Caco-2 (cell line): ENCODE measurements at regions of chr1 and their contacts with region 1.

Region 1: GRCh38 chr1:229258031-229258756 is 12.7 kb upstream of the RAB4A start:
- DNase-seq: peak; percentile 62 to 77
- H3K4me3 ChIP-seq: no peak overlapping the region
- H3K4me3 Mint-ChIP-seq: no peak overlapping the region
- H3K27ac Mint-ChIP-seq: peak overlapping the region; percentile 46
- H3K4me1 ChIP-seq: peaks cover 5% of the 10 kb centered on the region; the same call in 1 of the 2 replicates
- H3K4me1 Mint-ChIP-seq: peaks cover 3% of the 10 kb centered on the region
- H3K27me3 ChIP-seq: no peaks in the 10 kb centered on the region
- H3K27me3 Mint-ChIP-seq: no peaks in the 10 kb centered on the region
- CTCF ChIP-seq: peak; percentile 70 to 72

Region 2: DNA sequence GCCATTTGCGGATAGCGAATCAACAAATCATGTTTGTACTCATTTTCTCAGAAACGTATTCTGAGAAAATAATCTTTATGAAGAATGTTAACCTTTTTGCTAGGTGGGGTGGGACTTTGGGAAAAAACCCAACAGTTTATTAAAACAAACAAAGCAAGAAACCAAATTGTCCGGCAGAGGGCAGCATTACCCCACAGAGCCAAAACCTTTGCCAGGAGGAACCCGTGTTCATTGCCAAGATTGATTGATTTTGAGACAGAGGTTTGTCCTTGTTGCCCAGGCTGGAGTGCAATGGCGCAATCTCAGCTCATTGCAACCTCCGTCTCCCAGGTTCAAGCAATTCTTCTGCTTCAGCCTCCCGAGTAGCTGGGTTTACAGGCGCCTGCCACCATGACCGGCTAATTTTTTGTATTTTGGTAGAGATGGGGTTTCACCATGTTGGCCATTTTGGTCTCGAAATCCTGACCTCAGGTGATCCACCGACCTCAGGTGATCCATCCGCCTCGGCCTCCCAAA is 593.7 kb before region 1 on chr1:
- CTCF ChIA-PET with region 1: no interaction called
- POLR2A ChIA-PET with region 1: no interaction called
- intact Hi-C with region 1: loop called (anchors 1 kb)
- DNase-seq: peak; percentile 72 to 80
- H3K4me3 ChIP-seq: no peak overlapping the region
- H3K4me3 Mint-ChIP-seq: no peak overlapping the region
- H3K27ac Mint-ChIP-seq: no peak overlapping the region
- H3K4me1 ChIP-seq: peaks cover 8% of the 10 kb centered on the region
- H3K4me1 Mint-ChIP-seq: peaks cover 5% of the 10 kb centered on the region
- H3K27me3 ChIP-seq: no peaks in the 10 kb centered on the region
- H3K27me3 Mint-ChIP-seq: no peaks in the 10 kb centered on the region
- CTCF ChIP-seq: peak; percentile 65 to 90

Region 3: GRCh38 chr1:228691926-228692325 is 566.3 kb before region 1 on chr1:
- CTCF ChIA-PET with region 1: interaction called, 6 read pairs
- POLR2A ChIA-PET with region 1: no interaction called
- intact Hi-C with region 1: loop called (anchors 10 kb)
- DNase-seq: peak in 1 of 2 experiments; percentile 63
- H3K4me3 ChIP-seq: no peak overlapping the region
- H3K4me3 Mint-ChIP-seq: no peak overlapping the region
- H3K27ac Mint-ChIP-seq: no peak overlapping the region
- H3K4me1 ChIP-seq: no peaks in the 10 kb centered on the region
- H3K4me1 Mint-ChIP-seq: no peaks in the 10 kb centered on the region
- H3K27me3 ChIP-seq: no peaks in the 10 kb centered on the region
- H3K27me3 Mint-ChIP-seq: no peaks in the 10 kb centered on the region
- CTCF ChIP-seq: peak; percentile 37 to 72

Region 4: GRCh38 chr1:229043115-229043514 is 215.1 kb before region 1 on chr1:
- CTCF ChIA-PET with region 1: no interaction called
- POLR2A ChIA-PET with region 1: no interaction called
- intact Hi-C with region 1: no loop called
- DNase-seq: no peak
- H3K4me3 ChIP-seq: no peak overlapping the region
- H3K4me3 Mint-ChIP-seq: no peak overlapping the region
- H3K27ac Mint-ChIP-seq: no peak overlapping the region
- H3K4me1 ChIP-seq: no peaks in the 10 kb centered on the region
- H3K4me1 Mint-ChIP-seq: no peaks in the 10 kb centered on the region
- H3K27me3 ChIP-seq: no peaks in the 10 kb centered on the region
- H3K27me3 Mint-ChIP-seq: peaks cover 16% of the 10 kb centered on the region
- CTCF ChIP-seq: no peak

Region 5: GRCh38 chr1:229237320-229237719 is 20.9 kb before region 1 on chr1:
- CTCF ChIA-PET with region 1: interaction called, 3 read pairs
- POLR2A ChIA-PET with region 1: no interaction called
- intact Hi-C with region 1: loop called (anchors 2 kb)
- DNase-seq: no peak
- H3K4me3 ChIP-seq: no peak overlapping the region
- H3K4me3 Mint-ChIP-seq: no peak overlapping the region
- H3K27ac Mint-ChIP-seq: no peak overlapping the region
- H3K4me1 ChIP-seq: peaks cover 5% of the 10 kb centered on the region; the same call in 1 of the 2 replicates
- H3K4me1 Mint-ChIP-seq: peaks cover 6% of the 10 kb centered on the region
- H3K27me3 ChIP-seq: no peaks in the 10 kb centered on the region
- H3K27me3 Mint-ChIP-seq: no peaks in the 10 kb centered on the region
- CTCF ChIP-seq: no peak

Region 6: DNA sequence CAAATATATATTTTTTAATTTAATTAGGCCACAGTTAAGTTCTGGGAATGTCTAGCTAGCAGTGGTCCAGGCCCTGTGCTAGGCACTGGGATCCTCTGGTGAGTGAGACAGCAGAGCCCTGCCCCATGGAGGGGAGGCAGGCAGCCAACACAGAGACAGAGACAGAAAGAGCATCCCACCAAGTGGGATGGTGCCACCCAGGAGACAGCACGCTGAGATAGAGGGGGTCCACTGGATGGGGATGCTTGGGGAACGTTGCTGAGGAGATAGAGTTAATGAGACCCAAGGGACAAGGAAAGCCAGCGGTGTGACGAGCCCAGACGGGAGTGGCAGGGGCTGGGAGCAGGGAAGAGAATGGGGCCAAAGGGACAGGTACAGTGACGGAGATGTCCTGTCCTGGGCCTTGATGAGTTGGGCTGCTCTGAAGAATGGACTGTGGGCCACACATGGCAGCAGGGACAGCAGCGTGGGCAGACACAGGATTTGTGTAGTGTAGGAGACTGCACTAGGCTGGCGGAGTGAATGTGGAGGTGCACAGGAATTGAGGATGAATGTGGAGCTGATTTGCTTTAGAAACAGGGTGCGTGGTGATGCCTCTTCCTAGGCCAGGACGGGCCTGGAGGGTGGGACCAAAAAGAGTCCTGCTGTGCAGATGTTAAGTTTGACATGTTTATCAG is 35.5 kb after region 1 on chr1:
- CTCF ChIA-PET with region 1: no interaction called
- POLR2A ChIA-PET with region 1: no interaction called
- intact Hi-C with region 1: no loop called
- DNase-seq: no peak
- H3K4me3 ChIP-seq: no peak overlapping the region
- H3K4me3 Mint-ChIP-seq: no peak overlapping the region
- H3K27ac Mint-ChIP-seq: peak overlapping the region; percentile 67
- H3K4me1 ChIP-seq: peaks cover 32% of the 10 kb centered on the region
- H3K4me1 Mint-ChIP-seq: peaks cover 18% of the 10 kb centered on the region
- H3K27me3 ChIP-seq: no peaks in the 10 kb centered on the region
- H3K27me3 Mint-ChIP-seq: no peaks in the 10 kb centered on the region
- CTCF ChIP-seq: no peak

Region 7: DNA sequence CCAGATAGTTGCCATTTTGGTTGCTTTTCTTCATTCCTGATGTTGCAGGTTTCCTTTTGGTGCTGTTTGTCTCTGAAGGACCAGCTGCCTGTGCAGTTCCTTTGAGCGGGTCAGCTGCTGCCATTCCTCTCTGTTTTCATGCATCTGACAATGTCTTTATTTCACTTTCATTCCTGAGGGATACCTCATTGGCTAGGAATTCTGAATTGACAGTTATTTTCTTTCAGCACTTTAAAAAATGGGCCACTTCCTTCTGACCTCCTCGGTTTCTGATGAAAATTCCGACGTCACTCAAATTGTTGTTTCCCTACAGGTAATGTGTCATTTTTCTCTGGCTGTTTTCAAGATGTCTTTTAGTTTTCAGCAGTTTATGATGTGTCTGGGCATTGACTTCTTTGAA is 59.9 kb after region 1 on chr1:
- CTCF ChIA-PET with region 1: no interaction called
- POLR2A ChIA-PET with region 1: no interaction called
- intact Hi-C with region 1: no loop called
- DNase-seq: no peak
- H3K4me3 ChIP-seq: no peak overlapping the region
- H3K4me3 Mint-ChIP-seq: no peak overlapping the region
- H3K27ac Mint-ChIP-seq: no peak overlapping the region
- H3K4me1 ChIP-seq: no peaks in the 10 kb centered on the region
- H3K4me1 Mint-ChIP-seq: no peaks in the 10 kb centered on the region
- H3K27me3 ChIP-seq: no peaks in the 10 kb centered on the region
- H3K27me3 Mint-ChIP-seq: no peaks in the 10 kb centered on the region
- CTCF ChIP-seq: no peak

Region 8: GRCh38 chr1:229360417-229360816 is 102.2 kb after region 1 on chr1:
- CTCF ChIA-PET with region 1: no interaction called
- POLR2A ChIA-PET with region 1: no interaction called
- intact Hi-C with region 1: no loop called
- DNase-seq: no peak
- H3K4me3 ChIP-seq: no peak overlapping the region
- H3K4me3 Mint-ChIP-seq: no peak overlapping the region
- H3K27ac Mint-ChIP-seq: no peak overlapping the region
- H3K4me1 ChIP-seq: no peaks in the 10 kb centered on the region
- H3K4me1 Mint-ChIP-seq: no peaks in the 10 kb centered on the region
- H3K27me3 ChIP-seq: no peaks in the 10 kb centered on the region
- H3K27me3 Mint-ChIP-seq: peaks cover 14% of the 10 kb centered on the region
- CTCF ChIP-seq: no peak

Region 9: GRCh38 chr1:229452956-229453801 is 195.0 kb after region 1 on chr1:
- CTCF ChIA-PET with region 1: no interaction called
- POLR2A ChIA-PET with region 1: no interaction called
- intact Hi-C with region 1: loop called (anchors 1 kb)
- DNase-seq: peak in 1 of 2 experiments; percentile 18
- H3K4me3 ChIP-seq: no peak overlapping the region
- H3K4me3 Mint-ChIP-seq: no peak overlapping the region
- H3K27ac Mint-ChIP-seq: no peak overlapping the region
- H3K4me1 ChIP-seq: no peaks in the 10 kb centered on the region
- H3K4me1 Mint-ChIP-seq: no peaks in the 10 kb centered on the region
- H3K27me3 ChIP-seq: no peaks in the 10 kb centered on the region
- H3K27me3 Mint-ChIP-seq: no peaks in the 10 kb centered on the region
- CTCF ChIP-seq: peak; percentile 44 to 78

Region 10: DNA sequence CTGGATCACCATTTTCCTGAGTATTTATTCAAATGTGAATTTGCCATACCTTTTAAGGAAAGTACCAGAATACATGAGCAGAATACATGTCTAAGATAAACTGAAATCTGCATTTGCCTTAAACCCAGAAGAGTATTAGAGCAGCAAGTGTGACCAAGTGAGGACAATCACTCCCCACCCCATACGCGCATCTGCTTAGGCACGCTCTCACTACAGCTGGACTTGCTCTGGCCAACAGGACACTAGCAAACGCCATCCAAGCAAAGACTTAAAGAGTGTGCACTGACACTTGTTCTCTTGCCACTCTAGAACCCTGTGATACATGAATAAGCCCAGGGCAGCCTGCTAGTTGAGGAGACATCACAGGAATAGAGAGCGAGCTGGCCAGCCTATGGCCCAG is 224.3 kb after region 1 on chr1:
- CTCF ChIA-PET with region 1: interaction called, 18 read pairs
- POLR2A ChIA-PET with region 1: no interaction called
- intact Hi-C with region 1: loop called (anchors 1 kb)
- DNase-seq: no peak
- H3K4me3 ChIP-seq: no peak overlapping the region
- H3K4me3 Mint-ChIP-seq: no peak overlapping the region
- H3K27ac Mint-ChIP-seq: no peak overlapping the region
- H3K4me1 ChIP-seq: no peaks in the 10 kb centered on the region
- H3K4me1 Mint-ChIP-seq: peaks cover 7% of the 10 kb centered on the region
- H3K27me3 ChIP-seq: no peaks in the 10 kb centered on the region
- H3K27me3 Mint-ChIP-seq: no peaks in the 10 kb centered on the region
- CTCF ChIP-seq: no peak

Region 11: GRCh38 chr1:229514578-229515275 is 256.5 kb after region 1 on chr1:
- CTCF ChIA-PET with region 1: interaction called, 3 read pairs
- POLR2A ChIA-PET with region 1: no interaction called
- intact Hi-C with region 1: loop called (anchors 1 kb)
- DNase-seq: peak; percentile 74 to 75
- H3K4me3 ChIP-seq: no peak overlapping the region
- H3K4me3 Mint-ChIP-seq: no peak overlapping the region
- H3K27ac Mint-ChIP-seq: no peak overlapping the region
- H3K4me1 ChIP-seq: 0 out of 2 replicates have a peak, but pooled peaks cover 2% of the 10 kb centered on the region
- H3K4me1 Mint-ChIP-seq: peaks cover 10% of the 10 kb centered on the region
- H3K27me3 ChIP-seq: no peaks in the 10 kb centered on the region
- H3K27me3 Mint-ChIP-seq: no peaks in the 10 kb centered on the region
- CTCF ChIP-seq: peak; percentile 69 to 90